ENCODE measurements at regions of chr22 and their contacts with region 1.

Region 1: DNA sequence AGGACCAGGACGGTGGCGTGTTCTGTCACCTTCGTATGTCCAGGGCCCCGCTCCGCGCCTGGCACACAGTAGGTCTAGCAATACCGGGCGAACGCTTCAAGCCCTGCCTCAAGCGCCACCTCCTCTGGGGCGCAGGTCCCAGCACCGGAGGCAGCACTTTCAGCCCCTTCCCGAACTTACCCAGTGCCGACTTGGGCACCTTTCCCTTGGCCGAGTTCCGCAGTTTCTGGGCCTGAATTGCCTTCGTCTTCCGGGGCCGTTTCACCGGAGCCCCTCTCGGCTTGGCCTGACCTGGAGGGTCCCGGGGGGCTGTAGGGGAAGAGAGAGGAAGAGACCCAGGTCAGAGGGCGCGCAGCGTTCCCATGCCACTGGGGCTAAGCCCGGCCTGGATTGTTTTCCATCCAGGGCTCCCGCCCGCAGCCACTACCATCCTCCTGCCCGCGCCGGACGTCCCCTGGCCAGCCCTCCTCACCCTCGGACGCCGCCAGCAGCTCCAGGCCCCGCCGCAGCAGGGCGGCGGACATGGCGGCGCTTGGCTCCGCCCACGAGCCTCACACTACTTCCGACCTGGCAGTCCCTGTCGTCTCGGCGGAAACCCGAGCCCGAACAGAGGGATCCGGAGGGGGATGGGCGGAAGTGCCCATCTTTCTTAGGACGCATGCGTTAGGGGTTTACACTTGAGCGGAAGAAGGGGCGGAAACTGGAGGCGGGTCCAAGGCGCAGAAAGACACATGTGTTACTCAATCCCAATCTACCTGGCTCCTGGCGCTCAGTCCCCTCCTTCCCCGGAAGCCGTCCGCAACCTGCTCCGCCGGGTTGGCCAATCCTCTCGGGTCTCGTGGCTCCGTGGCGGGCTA is at the start of gene RPS19BP1:
- DNase-seq: peak; percentile 94 to 100
- H3K4me3 ChIP-seq: peak within 1 kb of the TSS; percentile 73 to 97 (median 96)
- H3K27ac ChIP-seq: peak within 1 kb of the TSS; percentile 67
- H3K4me1 ChIP-seq: peaks cover 12 to 45% (median 25%) of the 10 kb centered on the region in 4 experiments
- H3K27me3 ChIP-seq: no peaks in the 10 kb centered on the region
- CTCF ChIP-seq: no peak
- EP300 ChIP-seq: 0 out of 3 replicates have a peak, but pooled peaks of 1 of the 2 experiments have one; percentile 20
- POLR2A ChIP-seq: peak in 1 of 2 experiments; percentile 77; a peak in 2 of 3 replicates
- RAD21 ChIP-seq: no peak
- total RNA-seq, gene RPS19BP1: 77.5 and 77.9 TPM in 2 replicates

Region 2: DNA sequence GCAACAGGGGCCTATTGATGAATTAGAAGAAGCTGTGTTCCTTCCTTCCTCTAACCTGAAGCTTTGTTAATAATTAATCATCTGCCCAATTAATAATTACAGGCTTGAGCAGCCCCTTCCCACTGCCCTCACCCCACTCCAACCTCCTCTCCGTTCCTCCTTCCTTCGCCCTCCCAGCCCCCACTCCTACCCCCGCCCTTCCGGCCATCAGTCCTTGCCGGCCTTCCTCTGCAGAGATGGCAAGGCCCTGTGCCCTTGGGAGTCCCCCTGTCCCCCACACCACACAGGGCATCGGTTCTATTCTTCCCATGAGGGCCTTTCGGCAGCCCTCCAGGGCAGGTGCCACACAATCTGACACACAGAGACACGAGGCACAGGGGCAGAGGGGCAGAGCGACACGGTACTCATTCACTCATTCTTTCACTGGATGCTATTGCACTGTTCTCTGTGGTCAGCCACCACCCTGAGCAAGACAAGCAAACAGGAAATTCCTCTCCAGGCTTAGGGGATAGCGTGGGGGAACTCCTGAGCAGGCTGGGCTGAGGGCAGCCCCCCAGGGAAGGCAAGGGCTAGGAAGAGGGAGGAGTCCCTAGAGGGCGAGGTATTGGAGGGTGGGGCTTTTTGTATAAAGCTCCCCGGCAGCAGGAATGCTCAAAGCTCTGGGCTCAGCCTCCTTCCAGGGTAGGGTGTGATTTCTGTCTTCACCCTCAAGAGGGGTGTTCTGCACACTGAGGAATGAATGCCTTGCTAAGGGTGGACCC is 60.9 kb before region 1 on chr22:
- CTCF ChIA-PET with region 1: interaction called, 11 read pairs
- POLR2A ChIA-PET with region 1: no interaction called
- DNase-seq: no peak
- H3K4me3 ChIP-seq: no peak overlapping the region; a peak in 1 of 8 replicates
- H3K27ac ChIP-seq: no peak overlapping the region
- H3K4me1 ChIP-seq: peaks cover 16 to 51% (median 39%) of the 10 kb centered on the region in 4 experiments
- H3K27me3 ChIP-seq: no peaks in the 10 kb centered on the region
- CTCF ChIP-seq: no peak
- EP300 ChIP-seq: no peak
- POLR2A ChIP-seq: no peak
- RAD21 ChIP-seq: no peak

Region 3: GRCh38 chr22:39508393-39508792 is 24.1 kb before region 1 on chr22:
- CTCF ChIA-PET with region 1: interaction called, 361 read pairs
- POLR2A ChIA-PET with region 1: interaction called, 72 read pairs
- DNase-seq: no peak
- H3K4me3 ChIP-seq: no peak overlapping the region
- H3K27ac ChIP-seq: no peak overlapping the region
- H3K4me1 ChIP-seq: peaks cover 0 to 3% (median 0%) of the 10 kb centered on the region in 4 experiments; a peak in 2 of 7 replicates
- H3K27me3 ChIP-seq: peaks cover 38 to 77% (median 75%) of the 10 kb centered on the region in 4 experiments
- CTCF ChIP-seq: no peak
- EP300 ChIP-seq: no peak
- POLR2A ChIP-seq: no peak
- RAD21 ChIP-seq: no peak

Region 4: GRCh38 chr22:39543095-39543494 is 10.7 kb after region 1 on chr22:
- CTCF ChIA-PET with region 1: interaction called, 50 read pairs
- POLR2A ChIA-PET with region 1: no interaction called
- DNase-seq: no peak
- H3K4me3 ChIP-seq: no peak overlapping the region
- H3K27ac ChIP-seq: no peak overlapping the region
- H3K4me1 ChIP-seq: peaks cover 0 to under 1% (median under 1%) of the 10 kb centered on the region in 4 experiments; a peak in 3 of 7 replicates
- H3K27me3 ChIP-seq: peaks cover 0 to 15% (median 11%) of the 10 kb centered on the region in 4 experiments; a peak in 6 of 7 replicates
- CTCF ChIP-seq: peak; percentile 67 to 89 (median 84)
- EP300 ChIP-seq: no peak
- POLR2A ChIP-seq: no peak
- RAD21 ChIP-seq: peak; percentile 75 to 78

Region 5: DNA sequence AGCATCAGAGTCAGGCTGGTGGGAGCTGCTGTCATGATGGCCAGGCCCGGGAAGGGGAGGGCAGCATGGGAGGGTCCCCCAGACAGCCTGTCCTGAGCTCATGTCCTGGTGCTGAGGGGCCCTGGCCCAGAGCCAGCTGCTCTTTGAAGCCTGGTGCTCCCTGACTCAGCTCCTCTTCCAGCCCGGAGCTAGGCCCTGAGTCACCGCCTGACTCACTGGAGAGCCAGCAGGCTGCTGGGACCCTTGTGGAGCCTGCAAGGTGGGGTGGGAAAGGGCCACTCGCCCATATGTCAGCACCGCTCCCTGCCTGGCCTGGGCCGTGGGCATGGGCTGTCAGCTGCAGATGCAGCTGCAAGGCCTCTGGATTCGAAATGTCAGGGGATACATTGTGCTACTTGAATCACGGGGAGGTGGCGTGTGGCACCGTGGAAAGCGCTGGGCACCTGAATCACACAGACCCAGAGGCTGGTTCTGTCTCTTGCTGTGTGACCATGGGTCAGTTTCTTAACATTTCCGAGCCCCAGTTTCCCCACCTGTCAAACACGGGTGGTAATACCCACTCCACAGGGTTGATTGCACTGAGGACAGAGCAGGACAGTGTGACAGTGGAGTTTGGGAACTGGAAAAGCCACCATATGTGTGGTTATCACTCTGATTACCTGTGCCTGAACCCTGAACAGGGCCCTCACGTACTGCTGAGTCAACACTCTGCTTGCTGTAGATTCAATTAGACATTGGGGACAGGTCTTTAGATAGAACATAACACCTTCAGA is 42.5 kb after region 1 on chr22:
- CTCF ChIA-PET with region 1: interaction called, 12 read pairs
- POLR2A ChIA-PET with region 1: no interaction called
- DNase-seq: no peak
- H3K4me3 ChIP-seq: no peak overlapping the region
- H3K27ac ChIP-seq: no peak overlapping the region
- H3K4me1 ChIP-seq: peaks cover 0 to 1% (median 0%) of the 10 kb centered on the region in 4 experiments; a peak in 2 of 7 replicates
- H3K27me3 ChIP-seq: peaks cover 0 to 2% (median 0%) of the 10 kb centered on the region in 4 experiments; a peak in 1 of 7 replicates
- CTCF ChIP-seq: no peak
- EP300 ChIP-seq: no peak
- POLR2A ChIP-seq: no peak
- RAD21 ChIP-seq: no peak

Region 6: GRCh38 chr22:39601180-39601535 is 68.7 kb after region 1 on chr22:
- CTCF ChIA-PET with region 1: no interaction called
- POLR2A ChIA-PET with region 1: no interaction called
- DNase-seq: no peak
- H3K4me3 ChIP-seq: no peak overlapping the region
- H3K27ac ChIP-seq: no peak overlapping the region
- H3K4me1 ChIP-seq: peaks cover 0 to 7% (median 5%) of the 10 kb centered on the region in 4 experiments; a peak in 6 of 7 replicates
- H3K27me3 ChIP-seq: peaks cover 0 to 15% (median 5%) of the 10 kb centered on the region in 4 experiments; a peak in 4 of 7 replicates
- CTCF ChIP-seq: peak in 2 of 3 experiments; percentile 7 to 24; a peak in 2 of 4 replicates
- EP300 ChIP-seq: no peak
- POLR2A ChIP-seq: no peak
- RAD21 ChIP-seq: no peak; a peak in 1 of 4 replicates

Region 7: DNA sequence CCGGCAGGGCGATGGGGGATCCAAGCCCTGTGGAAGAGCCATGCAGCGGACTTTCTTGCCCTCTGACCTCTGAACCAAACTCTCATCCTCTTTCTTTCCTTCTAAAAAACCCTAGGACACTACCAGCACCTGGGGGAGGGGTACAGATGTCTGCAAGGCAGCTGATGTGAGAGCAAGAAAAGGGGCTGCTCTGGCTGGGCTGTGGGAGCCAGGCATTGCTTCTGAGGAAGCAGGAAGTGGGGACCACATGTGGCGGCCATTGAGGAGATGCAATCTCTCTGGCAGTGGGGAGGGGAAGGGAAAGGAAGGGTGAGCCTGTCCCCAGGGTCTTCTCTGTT is 498.3 kb after region 1 on chr22:
- CTCF ChIA-PET with region 1: interaction called, 23 read pairs
- POLR2A ChIA-PET with region 1: interaction called, 4 read pairs
- DNase-seq: no peak
- H3K4me3 ChIP-seq: no peak overlapping the region
- H3K27ac ChIP-seq: no peak overlapping the region
- H3K4me1 ChIP-seq: peaks cover 0 to 6% (median 4%) of the 10 kb centered on the region in 4 experiments; a peak in 4 of 7 replicates
- H3K27me3 ChIP-seq: no peaks in the 10 kb centered on the region
- CTCF ChIP-seq: no peak
- EP300 ChIP-seq: no peak
- POLR2A ChIP-seq: no peak
- RAD21 ChIP-seq: no peak

Measured in H1 (cell line).